GM23248 (cell line): ENCODE measurements at regions of chr4 and their contacts with region 1.

Region 1: DNA sequence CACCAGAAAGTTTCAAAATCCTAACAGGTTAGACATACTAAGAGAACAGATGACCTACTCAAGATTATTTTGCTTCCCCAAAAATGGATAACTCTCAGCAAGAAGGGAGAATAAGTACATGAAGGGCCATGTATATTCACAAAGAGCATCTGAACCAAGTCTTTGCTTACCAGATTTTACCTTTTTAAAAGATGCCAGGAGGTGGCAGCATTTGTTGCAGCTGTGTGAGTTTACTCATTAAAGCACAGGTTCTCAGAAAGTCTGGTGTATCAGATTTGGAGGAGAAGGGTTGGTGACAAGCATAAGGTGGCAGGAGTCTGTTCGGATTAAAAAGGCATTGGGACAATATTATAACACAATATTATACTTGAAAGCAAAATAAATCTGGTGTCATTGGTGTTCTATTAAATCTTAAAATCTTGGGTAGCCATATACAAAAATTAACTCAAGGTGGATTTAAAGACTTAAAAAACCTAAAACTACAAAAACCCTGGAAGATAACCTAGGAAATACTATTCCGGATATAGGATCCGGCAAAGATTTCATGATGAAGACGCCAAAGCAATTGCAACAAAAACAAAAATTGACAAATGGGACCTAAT is 51.3 kb upstream of the NFKB1 start:
- DNase-seq: peak; percentile 73
- H3K4me3 ChIP-seq: no peak overlapping the region
- H3K27ac ChIP-seq: no peak overlapping the region
- H3K4me1 ChIP-seq: no peaks in the 10 kb centered on the region
- H3K27me3 ChIP-seq: no peaks in the 10 kb centered on the region

Region 2: GRCh38 chr4:103008875-103009729 is 559.2 kb after region 1 on chr4:
- in situ Hi-C with region 1: loop called (anchors 10 kb)
- DNase-seq: peak; percentile 76
- H3K4me3 ChIP-seq: no peak overlapping the region
- H3K27ac ChIP-seq: no peak overlapping the region
- H3K4me1 ChIP-seq: peaks cover 13% of the 10 kb centered on the region
- H3K27me3 ChIP-seq: no peaks in the 10 kb centered on the region